ENCODE measurements at regions of chr1 and their contacts with region 1.

Region 1: DNA sequence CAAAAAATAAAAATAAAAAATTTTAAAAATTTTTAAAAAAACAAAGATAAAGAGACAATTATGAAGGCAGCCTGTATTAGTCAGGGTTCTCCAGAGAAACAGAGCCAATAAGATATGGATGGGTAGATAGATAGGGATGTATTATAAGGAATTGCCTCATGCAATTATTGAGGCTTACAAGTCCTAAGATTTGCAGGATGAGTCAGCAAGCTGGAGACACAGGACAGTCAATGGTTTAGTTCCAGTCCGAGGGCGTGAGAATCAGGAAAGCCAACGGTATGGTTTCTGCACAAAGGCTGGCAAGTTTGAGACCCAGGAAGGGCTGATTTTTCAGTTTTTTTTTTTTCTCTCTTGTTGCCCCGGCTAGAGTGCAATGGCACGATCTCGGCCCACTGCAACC is 24.1 kb upstream of the EIF4G3 start:
- DNase-seq: no peak
- H3K4me3 ChIP-seq: no peak overlapping the region
- H3K27ac ChIP-seq: no peak overlapping the region
- H3K4me1 ChIP-seq: no peaks in the 10 kb centered on the region
- H3K27me3 ChIP-seq: no peaks in the 10 kb centered on the region

Region 2: GRCh38 chr1:20932437-20932977 is 268.3 kb before region 1 on chr1:
- CTCF ChIA-PET with region 1: interaction called, 12 read pairs
- POLR2A ChIA-PET with region 1: no interaction called
- DNase-seq: peak in 2 of 3 donors; percentile 45 to 56
- H3K4me3 ChIP-seq: no peak overlapping the region
- H3K27ac ChIP-seq: no peak overlapping the region
- H3K4me1 ChIP-seq: peaks cover 0 to 10% (median 7%) of the 10 kb centered on the region in 4 experiments
- H3K27me3 ChIP-seq: no peaks in the 10 kb centered on the region

Region 3: GRCh38 chr1:20974069-20974468 is 226.7 kb before region 1 on chr1:
- CTCF ChIA-PET with region 1: interaction called, 97 read pairs
- POLR2A ChIA-PET with region 1: interaction called, 10 read pairs
- DNase-seq: no peak
- H3K4me3 ChIP-seq: no peak overlapping the region
- H3K27ac ChIP-seq: no peak overlapping the region
- H3K4me1 ChIP-seq: no peaks in the 10 kb centered on the region
- H3K27me3 ChIP-seq: no peaks in the 10 kb centered on the region

Region 4: GRCh38 chr1:20992322-20993056 is 208.3 kb before region 1 on chr1:
- CTCF ChIA-PET with region 1: interaction called, 33 read pairs
- POLR2A ChIA-PET with region 1: no interaction called
- DNase-seq: peak in 2 of 3 donors; percentile 38 to 49
- H3K4me3 ChIP-seq: peak overlapping the region in 3 of 7 experiments; percentile 10 to 53 (median 29)
- H3K27ac ChIP-seq: peak overlapping the region; percentile 46 to 74
- H3K4me1 ChIP-seq: peaks cover 12 to 42% (median 15%) of the 10 kb centered on the region in 4 experiments
- H3K27me3 ChIP-seq: no peaks in the 10 kb centered on the region

Region 5: GRCh38 chr1:21072721-21073120 is 128.0 kb before region 1 on chr1:
- CTCF ChIA-PET with region 1: interaction called, 28 read pairs
- POLR2A ChIA-PET with region 1: no interaction called
- DNase-seq: peak; percentile 15 to 53 (median 50)
- H3K4me3 ChIP-seq: no peak overlapping the region
- H3K27ac ChIP-seq: no peak overlapping the region
- H3K4me1 ChIP-seq: peaks cover 0 to 20% (median 7%) of the 10 kb centered on the region in 4 experiments
- H3K27me3 ChIP-seq: no peaks in the 10 kb centered on the region

Region 6: DNA sequence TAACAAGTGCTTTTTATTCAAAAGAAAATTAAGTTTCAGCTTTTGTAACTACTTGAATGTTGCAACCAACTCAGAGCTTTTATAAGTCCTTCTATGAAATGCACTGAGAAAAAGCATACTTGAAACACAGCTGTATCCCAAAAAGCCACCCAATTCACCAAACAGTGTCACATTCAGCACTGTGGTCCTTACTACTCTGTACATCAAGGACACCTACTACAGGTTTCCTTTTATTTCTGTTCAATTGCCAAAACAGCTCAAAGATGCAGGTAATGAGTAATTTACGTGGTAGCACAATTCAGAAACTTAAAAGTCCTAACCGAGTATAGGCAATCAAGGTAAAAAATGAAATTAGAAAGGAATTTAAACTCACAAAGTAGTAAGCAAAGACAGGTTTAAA is 26.5 kb before region 1 on chr1:
- CTCF ChIA-PET with region 1: interaction called, 11 read pairs
- POLR2A ChIA-PET with region 1: no interaction called
- DNase-seq: no peak
- H3K4me3 ChIP-seq: peak overlapping the region in 3 of 7 experiments; percentile 80 to 91 (median 85)
- H3K27ac ChIP-seq: no peak overlapping the region
- H3K4me1 ChIP-seq: peaks cover 7 to 29% (median 24%) of the 10 kb centered on the region in 4 experiments
- H3K27me3 ChIP-seq: no peaks in the 10 kb centered on the region

Region 7: GRCh38 chr1:21184276-21184675 is 16.5 kb before region 1 on chr1:
- CTCF ChIA-PET with region 1: interaction called, 16 read pairs
- POLR2A ChIA-PET with region 1: no interaction called
- DNase-seq: peak; percentile 31 to 77 (median 74)
- H3K4me3 ChIP-seq: no peak overlapping the region
- H3K27ac ChIP-seq: no peak overlapping the region
- H3K4me1 ChIP-seq: peaks cover 4 to 16% (median 14%) of the 10 kb centered on the region in 4 experiments
- H3K27me3 ChIP-seq: no peaks in the 10 kb centered on the region

Region 8: GRCh38 chr1:21344750-21345443 is 144.1 kb after region 1 on chr1:
- CTCF ChIA-PET with region 1: no interaction called
- POLR2A ChIA-PET with region 1: no interaction called
- DNase-seq: peak in 1 of 3 donors; percentile 19
- H3K4me3 ChIP-seq: peak overlapping the region; percentile 31 to 78 (median 63)
- H3K27ac ChIP-seq: no peak overlapping the region
- H3K4me1 ChIP-seq: peaks cover 0 to 29% (median 25%) of the 10 kb centered on the region in 4 experiments
- H3K27me3 ChIP-seq: peaks cover 0 to 59% (median 8%) of the 10 kb centered on the region in 5 experiments